CD4-positive, alpha-beta T cell (primary cell): ENCODE measurements at regions of chr6 and their contacts with region 1.

Region 1: DNA sequence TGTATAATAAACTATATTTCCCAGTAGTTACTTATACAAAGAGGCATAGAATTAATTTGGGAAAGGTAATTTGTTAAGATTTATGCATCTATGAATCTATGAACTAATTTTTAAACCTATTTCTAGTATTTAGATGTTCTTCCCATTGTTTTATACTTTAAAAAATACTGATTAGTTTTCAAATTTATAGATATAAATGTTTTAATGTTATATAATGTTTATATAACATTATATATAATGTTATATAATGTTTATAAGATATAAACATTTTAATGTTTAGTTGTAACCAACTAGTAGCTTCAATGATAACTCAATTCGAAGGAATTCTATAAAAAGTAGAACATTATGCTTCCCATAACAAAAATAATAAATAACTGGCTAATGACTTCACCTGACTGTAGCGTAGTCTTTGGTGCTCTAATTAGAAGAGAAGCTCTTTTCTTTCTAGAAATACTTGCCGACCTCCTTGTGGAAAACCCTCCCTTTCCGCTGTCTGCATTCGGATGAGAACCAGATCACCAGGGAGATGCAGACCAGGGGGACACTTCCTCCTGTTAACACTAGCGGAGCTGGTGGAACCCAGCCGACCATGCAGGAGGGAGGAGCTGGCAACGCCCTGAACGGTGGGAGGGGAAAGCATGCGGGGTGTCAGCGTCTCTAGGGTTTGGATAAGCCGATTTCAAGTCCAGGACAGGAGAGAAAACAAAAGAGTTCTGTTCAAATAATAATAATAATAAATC is 158.4 kb downstream of the OR2B2 start:
- DNase-seq: peak; percentile 31 to 81 (median 54)
- ATAC-seq: peak; percentile 11
- H3K4me3 ChIP-seq: peak overlapping the region; percentile 71
- H3K4me3 Mint-ChIP-seq: peak overlapping the region; percentile 97
- H3K27ac ChIP-seq: no peak overlapping the region
- H3K27ac Mint-ChIP-seq: peak overlapping the region; percentile 98
- H3K4me1 ChIP-seq: peaks cover 22% of the 10 kb centered on the region
- H3K4me1 Mint-ChIP-seq: peaks cover 41% of the 10 kb centered on the region
- H3K27me3 ChIP-seq: no peaks in the 10 kb centered on the region
- H3K27me3 Mint-ChIP-seq: peaks cover 10% of the 10 kb centered on the region
- CTCF ChIP-seq: no peak

Region 2: DNA sequence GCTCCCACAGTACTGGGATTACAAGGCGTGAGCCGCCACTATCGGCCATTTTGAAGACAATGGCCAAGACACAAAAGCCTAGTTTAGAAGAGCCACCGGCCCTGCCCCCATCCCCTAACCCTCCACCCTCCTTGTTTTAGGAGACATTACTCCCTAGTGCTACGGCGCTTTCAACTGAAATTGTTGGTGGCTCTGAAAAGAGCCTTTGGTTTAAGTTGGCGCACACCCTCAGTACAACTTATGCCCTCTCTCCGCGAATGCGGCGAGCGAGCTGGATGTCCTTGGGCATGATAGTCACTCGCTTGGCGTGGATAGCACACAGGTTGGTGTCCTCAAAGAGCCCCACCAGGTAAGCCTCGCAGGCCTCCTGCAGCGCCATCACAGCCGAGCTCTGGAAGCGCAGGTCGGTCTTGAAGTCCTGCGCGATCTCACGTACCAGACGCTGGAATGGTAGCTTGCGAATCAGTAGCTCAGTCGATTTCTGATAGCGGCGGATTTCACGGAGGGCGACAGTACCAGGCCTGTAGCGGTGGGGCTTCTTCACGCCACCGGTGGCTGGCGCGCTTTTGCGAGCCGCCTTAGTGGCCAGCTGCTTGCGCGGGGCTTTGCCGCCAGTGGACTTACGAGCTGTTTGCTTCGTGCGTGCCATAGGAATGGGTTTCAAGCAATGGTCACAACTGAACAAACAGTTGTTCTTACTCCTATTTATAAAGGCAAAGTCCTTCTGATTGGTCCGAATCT is 1503.7 kb before region 1 on chr6:
- CTCF ChIA-PET with region 1: no interaction called
- POLR2A ChIA-PET with region 1: no interaction called
- intact Hi-C with region 1: no loop called
- DNase-seq: peak; percentile 64 to 93 (median 74)
- ATAC-seq: peak; percentile 78
- H3K4me3 ChIP-seq: peak overlapping the region; percentile 75
- H3K4me3 Mint-ChIP-seq: peak overlapping the region; percentile 97
- H3K27ac ChIP-seq: peak overlapping the region; percentile 72 to 80
- H3K27ac Mint-ChIP-seq: peak overlapping the region; percentile 88
- H3K4me1 ChIP-seq: peaks cover 29% of the 10 kb centered on the region
- H3K4me1 Mint-ChIP-seq: peaks cover 44% of the 10 kb centered on the region
- H3K27me3 ChIP-seq: no peaks in the 10 kb centered on the region
- H3K27me3 Mint-ChIP-seq: no peaks in the 10 kb centered on the region
- CTCF ChIP-seq: no peak

Region 3: GRCh38 chr6:27177485-27178406 is 576.1 kb before region 1 on chr6:
- CTCF ChIA-PET with region 1: interaction called, 11 read pairs
- POLR2A ChIA-PET with region 1: interaction called, 24 read pairs
- intact Hi-C with region 1: loop called (anchors 2 to 5 kb)
- DNase-seq: peak; percentile 44 to 90 (median 64)
- ATAC-seq: peak; percentile 64
- H3K4me3 ChIP-seq: peak overlapping the region; percentile 89
- H3K4me3 Mint-ChIP-seq: peak overlapping the region; percentile 99
- H3K27ac ChIP-seq: peak overlapping the region; percentile 27 to 63
- H3K27ac Mint-ChIP-seq: peak overlapping the region; percentile 100
- H3K4me1 ChIP-seq: peaks cover 21% of the 10 kb centered on the region
- H3K4me1 Mint-ChIP-seq: peaks cover 24% of the 10 kb centered on the region
- H3K27me3 ChIP-seq: no peaks in the 10 kb centered on the region
- H3K27me3 Mint-ChIP-seq: peaks cover 24% of the 10 kb centered on the region
- CTCF ChIP-seq: peak; percentile 54

Region 4: DNA sequence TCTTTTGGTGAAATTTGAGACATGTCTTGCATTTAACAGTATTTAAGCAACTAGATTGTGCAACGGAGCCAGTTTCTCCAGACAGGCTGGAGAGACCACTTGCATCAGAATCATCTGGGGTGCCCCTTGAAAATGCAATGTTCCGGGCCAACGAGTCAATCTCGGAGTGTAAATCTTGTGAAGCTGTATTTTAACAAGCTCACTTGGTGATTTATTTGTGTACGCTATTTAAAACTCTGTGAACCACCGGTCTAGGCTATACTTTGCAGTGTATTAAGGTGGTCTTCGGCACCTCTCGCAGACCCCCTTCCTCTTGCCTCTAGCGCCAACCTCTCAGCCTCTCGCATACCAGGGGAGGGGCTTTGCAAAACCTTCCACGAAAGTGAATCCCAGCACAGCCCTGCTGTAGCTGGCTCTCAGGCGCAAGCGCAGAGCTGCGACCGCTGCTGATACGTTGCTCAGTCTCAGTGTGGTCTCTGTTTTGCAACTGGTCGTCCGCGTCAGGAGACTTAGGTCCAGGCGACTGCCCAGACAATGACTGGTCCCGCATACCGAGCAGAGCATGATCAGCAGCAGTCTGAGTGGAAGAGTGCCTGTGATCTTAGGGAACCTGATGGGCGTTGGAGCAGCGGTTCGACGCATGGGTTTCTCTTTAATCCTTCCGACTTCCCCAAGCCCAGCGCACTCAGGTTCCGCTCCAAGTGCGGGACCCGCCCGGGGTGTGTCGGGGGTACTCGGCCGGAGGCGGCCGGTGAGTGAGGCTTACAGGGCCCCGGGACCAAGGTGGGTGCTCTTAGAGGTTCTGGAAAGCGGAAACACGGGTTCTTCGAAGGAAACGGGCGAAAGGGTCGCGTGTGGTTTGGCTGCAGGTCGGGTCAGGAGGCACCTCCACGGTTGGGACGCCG is 365.3 kb before region 1 on chr6 and contains the start of gene ZNF391:
- CTCF ChIA-PET with region 1: no interaction called
- POLR2A ChIA-PET with region 1: no interaction called
- intact Hi-C with region 1: loop called in 1 of 2 experiments (anchors 5 kb)
- DNase-seq: peak; percentile 41 to 80 (median 58)
- ATAC-seq: peak; percentile 87
- H3K4me3 ChIP-seq: peak within 1 kb of the TSS; percentile 78
- H3K4me3 Mint-ChIP-seq: peak within 1 kb of the TSS; percentile 98
- H3K27ac ChIP-seq: no peak within 1 kb of the TSS
- H3K27ac Mint-ChIP-seq: peak within 1 kb of the TSS; percentile 90
- H3K4me1 ChIP-seq: peaks cover 13% of the 10 kb centered on the region
- H3K4me1 Mint-ChIP-seq: peaks cover 24% of the 10 kb centered on the region
- H3K27me3 ChIP-seq: no peaks in the 10 kb centered on the region
- H3K27me3 Mint-ChIP-seq: peaks cover 2% of the 10 kb centered on the region
- CTCF ChIP-seq: no peak
- total RNA-seq, gene ZNF391: 1.6 to 1.8 TPM

Region 5: DNA sequence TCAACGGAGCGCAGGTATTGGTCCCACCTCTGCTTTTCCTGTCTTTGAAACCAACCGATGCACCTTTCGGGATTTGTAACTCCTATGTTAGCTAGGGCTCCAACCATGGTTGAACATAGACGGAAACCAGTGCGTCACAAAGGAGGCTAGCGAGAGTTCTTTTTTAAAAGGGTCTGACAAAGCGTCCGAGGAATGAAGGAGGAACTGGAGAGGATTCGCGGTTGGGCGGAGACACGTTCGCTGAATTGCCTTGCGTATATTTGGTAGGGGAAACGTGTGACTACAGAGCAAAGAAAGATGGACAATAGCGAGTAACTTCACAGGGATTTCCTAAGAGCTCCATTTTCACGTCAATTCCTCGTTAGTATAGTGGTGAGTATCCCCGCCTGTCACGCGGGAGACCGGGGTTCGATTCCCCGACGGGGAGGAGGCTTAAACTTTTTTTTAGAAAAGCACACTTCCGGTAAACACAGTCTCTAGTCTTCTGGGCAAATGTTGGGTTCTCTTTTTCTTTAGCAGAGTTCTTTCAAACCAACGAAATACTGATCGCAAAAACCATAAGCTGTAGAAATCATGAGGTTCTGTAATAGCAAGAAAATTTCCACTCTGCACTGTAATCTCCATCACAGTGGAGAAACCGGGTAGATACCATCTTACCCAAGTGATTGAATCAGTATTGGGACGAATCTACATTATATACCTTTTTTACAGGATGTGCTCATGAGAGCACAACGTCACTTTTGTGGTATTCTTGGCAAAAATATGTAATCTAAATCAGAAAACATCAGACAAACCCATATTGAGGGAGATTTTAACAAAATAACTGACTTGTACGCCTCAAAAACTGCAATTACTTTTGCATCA is 274.3 kb before region 1 on chr6:
- CTCF ChIA-PET with region 1: interaction called, 7 read pairs
- POLR2A ChIA-PET with region 1: interaction called, 52 read pairs
- intact Hi-C with region 1: loop called (anchors 2 kb)
- DNase-seq: peak; percentile 82 to 94 (median 90)
- ATAC-seq: peak; percentile 71
- H3K4me3 ChIP-seq: peak overlapping the region; percentile 62
- H3K4me3 Mint-ChIP-seq: no peak overlapping the region
- H3K27ac ChIP-seq: peak overlapping the region; percentile 93 to 94
- H3K27ac Mint-ChIP-seq: no peak overlapping the region
- H3K4me1 ChIP-seq: peaks cover 16% of the 10 kb centered on the region
- H3K4me1 Mint-ChIP-seq: peaks cover 3% of the 10 kb centered on the region
- H3K27me3 ChIP-seq: no peaks in the 10 kb centered on the region
- H3K27me3 Mint-ChIP-seq: no peaks in the 10 kb centered on the region
- CTCF ChIP-seq: no peak

Region 6: DNA sequence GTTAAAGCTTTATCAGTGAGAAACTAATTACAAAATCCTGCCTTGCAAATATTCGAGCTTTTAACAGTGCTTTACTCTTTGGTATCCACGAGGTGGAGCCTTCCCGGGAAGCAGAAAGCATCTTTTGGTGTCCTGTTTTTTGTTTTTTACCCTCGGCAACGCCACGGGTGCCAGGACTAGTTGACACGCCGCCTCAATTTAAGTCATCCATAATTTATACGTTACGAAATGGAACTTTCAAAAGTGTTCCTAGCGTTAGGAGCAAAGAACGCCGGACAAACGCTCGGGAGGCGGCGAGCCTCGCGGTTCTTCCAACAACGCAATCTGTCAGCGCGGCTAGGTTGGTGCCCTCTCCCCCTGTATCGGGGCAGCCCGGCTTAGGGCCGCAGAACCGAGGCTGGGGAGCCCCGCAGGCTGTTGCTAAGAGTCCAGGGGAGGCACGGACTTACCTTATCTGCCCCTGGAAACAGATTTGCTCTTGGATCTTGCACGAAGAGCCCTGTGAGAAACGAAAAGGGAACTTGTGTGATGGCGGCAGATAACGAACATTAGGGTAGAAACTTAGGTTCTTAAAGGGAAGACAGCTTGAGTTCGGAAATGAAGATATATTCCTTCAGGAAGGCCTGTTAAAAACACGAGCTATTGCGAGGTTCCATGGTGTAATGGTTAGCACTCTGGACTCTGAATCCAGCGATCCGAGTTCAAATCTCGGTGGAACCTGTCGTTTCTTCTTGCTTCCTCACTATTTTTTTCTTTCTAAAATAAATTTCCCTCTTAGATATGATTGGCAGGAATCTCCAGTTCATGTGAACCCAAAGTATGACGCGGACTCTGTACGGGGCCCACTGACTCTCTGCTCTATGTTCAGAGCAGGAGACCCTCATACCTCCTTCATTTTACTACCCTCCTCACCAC is 234.7 kb before region 1 on chr6:
- CTCF ChIA-PET with region 1: interaction called, 22 read pairs
- POLR2A ChIA-PET with region 1: interaction called, 23 read pairs
- intact Hi-C with region 1: loop called (anchors 1 kb)
- DNase-seq: peak; percentile 33 to 89 (median 54)
- ATAC-seq: peak; percentile 84
- H3K4me3 ChIP-seq: peak overlapping the region; percentile 92
- H3K4me3 Mint-ChIP-seq: peak overlapping the region; percentile 91
- H3K27ac ChIP-seq: peak overlapping the region; percentile 17 to 76
- H3K27ac Mint-ChIP-seq: peak overlapping the region; percentile 89
- H3K4me1 ChIP-seq: peaks cover 12% of the 10 kb centered on the region
- H3K4me1 Mint-ChIP-seq: peaks cover 31% of the 10 kb centered on the region
- H3K27me3 ChIP-seq: peaks cover 7% of the 10 kb centered on the region in 2 experiments
- H3K27me3 Mint-ChIP-seq: peaks cover 28% of the 10 kb centered on the region
- CTCF ChIP-seq: peak; percentile 78

Region 7: DNA sequence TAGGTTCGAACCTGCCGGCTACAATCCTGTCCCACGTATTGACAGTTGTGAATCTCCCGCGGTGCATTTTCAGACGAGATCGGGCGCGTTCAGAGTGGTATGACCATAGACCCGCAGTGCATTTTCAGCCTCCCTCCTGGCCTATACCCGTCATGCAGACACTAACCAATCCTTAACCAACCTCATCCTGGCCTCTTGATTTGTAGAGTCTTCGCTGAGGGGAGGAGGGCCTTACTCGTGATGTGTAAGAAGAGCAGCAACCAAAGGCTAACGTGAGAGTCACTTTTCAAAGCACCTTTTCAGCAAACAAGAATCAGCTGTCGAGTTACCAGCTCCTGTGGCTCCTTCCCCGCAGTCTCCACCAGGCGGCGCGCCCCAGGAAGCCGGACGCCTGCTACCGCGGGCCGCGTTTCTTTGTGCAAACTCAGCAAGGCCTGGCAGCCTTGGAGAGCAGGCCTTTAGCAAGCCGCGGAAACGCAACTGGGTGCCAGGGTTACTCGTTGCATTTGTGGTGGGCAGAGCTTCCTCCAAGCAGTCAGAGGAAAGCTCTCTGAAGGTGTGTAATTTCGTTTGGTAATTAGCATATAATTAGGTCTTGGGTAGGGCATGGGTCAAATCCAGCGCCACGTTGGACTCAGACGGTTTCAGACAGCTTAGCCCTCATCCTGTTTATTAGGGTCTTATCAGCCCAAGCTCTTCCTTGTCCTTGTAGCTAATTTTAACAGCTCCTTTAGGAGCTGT is 18.6 kb after region 1 on chr6:
- CTCF ChIA-PET with region 1: interaction called, 24 read pairs
- POLR2A ChIA-PET with region 1: interaction called, 8 read pairs
- intact Hi-C with region 1: no loop called
- DNase-seq: peak; percentile 70 to 92 (median 82)
- ATAC-seq: peak; percentile 97
- H3K4me3 ChIP-seq: no peak overlapping the region
- H3K4me3 Mint-ChIP-seq: peak overlapping the region; percentile 36
- H3K27ac ChIP-seq: no peak overlapping the region
- H3K27ac Mint-ChIP-seq: no peak overlapping the region
- H3K4me1 ChIP-seq: peaks cover 9% of the 10 kb centered on the region
- H3K4me1 Mint-ChIP-seq: peaks cover 9% of the 10 kb centered on the region
- H3K27me3 ChIP-seq: peaks cover 0 to 10% of the 10 kb centered on the region in 2 experiments
- H3K27me3 Mint-ChIP-seq: peaks cover 18% of the 10 kb centered on the region
- CTCF ChIP-seq: peak; percentile 90

Region 8: DNA sequence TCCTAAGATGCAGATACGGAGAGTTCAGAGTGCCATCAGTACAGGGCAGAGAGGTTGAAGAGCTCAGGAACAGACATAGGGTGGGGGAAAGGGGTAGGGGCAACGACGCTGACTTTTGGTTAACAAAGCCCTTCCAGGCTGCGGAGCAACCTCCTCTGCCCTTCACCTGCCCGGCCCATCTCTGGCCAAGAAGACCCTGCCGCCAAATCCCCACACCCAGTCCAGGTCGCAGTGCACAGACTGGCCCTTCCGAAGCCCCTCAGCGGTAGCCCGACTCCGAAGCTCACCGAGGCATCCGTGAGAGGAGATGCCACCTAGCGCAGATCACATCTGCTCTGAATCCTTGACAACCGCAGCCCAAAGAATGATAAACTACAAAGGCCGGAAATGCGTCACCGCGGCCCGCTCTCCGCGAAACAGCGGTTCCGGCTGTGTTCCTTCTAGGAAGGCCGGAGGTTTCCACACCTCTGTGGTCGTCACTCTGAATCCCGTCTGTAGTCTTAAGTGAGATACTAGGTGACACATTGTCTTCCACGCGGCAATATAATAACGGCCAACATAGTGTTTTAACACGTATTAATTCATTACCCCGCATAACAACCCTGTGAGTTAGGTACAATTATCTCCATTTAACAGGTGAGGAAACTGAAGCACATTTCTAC is 689.4 kb after region 1 on chr6 and contains the start of gene ZSCAN23:
- CTCF ChIA-PET with region 1: no interaction called
- POLR2A ChIA-PET with region 1: no interaction called
- intact Hi-C with region 1: loop called in 1 of 2 experiments (anchors 5 kb)
- DNase-seq: peak; percentile 68 to 94 (median 80)
- ATAC-seq: peak; percentile 91
- H3K4me3 ChIP-seq: peak within 1 kb of the TSS; percentile 53
- H3K4me3 Mint-ChIP-seq: peak within 1 kb of the TSS; percentile 96
- H3K27ac ChIP-seq: no peak within 1 kb of the TSS
- H3K27ac Mint-ChIP-seq: peak within 1 kb of the TSS; percentile 77
- H3K4me1 ChIP-seq: peaks cover 19% of the 10 kb centered on the region
- H3K4me1 Mint-ChIP-seq: peaks cover 34% of the 10 kb centered on the region
- H3K27me3 ChIP-seq: peaks cover 19 to 28% of the 10 kb centered on the region in 2 experiments
- H3K27me3 Mint-ChIP-seq: peaks cover 37% of the 10 kb centered on the region
- CTCF ChIP-seq: no peak
- total RNA-seq, gene ZSCAN23: 0.19 to 0.78 TPM

Region 9: GRCh38 chr6:29676981-29677601 is 1923.3 kb after region 1 on chr6:
- CTCF ChIA-PET with region 1: no interaction called
- POLR2A ChIA-PET with region 1: no interaction called
- intact Hi-C with region 1: no loop called
- DNase-seq: no peak
- ATAC-seq: no peak
- H3K4me3 ChIP-seq: no peak overlapping the region
- H3K4me3 Mint-ChIP-seq: no peak overlapping the region
- H3K27ac ChIP-seq: no peak overlapping the region
- H3K27ac Mint-ChIP-seq: no peak overlapping the region
- H3K4me1 ChIP-seq: peaks cover 15% of the 10 kb centered on the region
- H3K4me1 Mint-ChIP-seq: peaks cover 5% of the 10 kb centered on the region
- H3K27me3 ChIP-seq: peaks cover 0 to 7% of the 10 kb centered on the region in 2 experiments
- H3K27me3 Mint-ChIP-seq: peaks cover 20% of the 10 kb centered on the region
- CTCF ChIP-seq: no peak